Vagina (tissue), 2 donors: ENCODE measurements at regions of chr2 and their contacts with region 1.

Region 1: GRCh38 chr2:82896117-82896516 is 1563.0 kb downstream of the SUCLG1 start:
- DNase-seq: no peak
- H3K4me3 ChIP-seq: no peak overlapping the region
- H3K27ac ChIP-seq: no peak overlapping the region
- H3K4me1 ChIP-seq: no peaks in the 10 kb centered on the region
- H3K27me3 ChIP-seq: no peaks in the 10 kb centered on the region
- CTCF ChIP-seq: no peak
- POLR2A ChIP-seq: no peak

Region 2: DNA sequence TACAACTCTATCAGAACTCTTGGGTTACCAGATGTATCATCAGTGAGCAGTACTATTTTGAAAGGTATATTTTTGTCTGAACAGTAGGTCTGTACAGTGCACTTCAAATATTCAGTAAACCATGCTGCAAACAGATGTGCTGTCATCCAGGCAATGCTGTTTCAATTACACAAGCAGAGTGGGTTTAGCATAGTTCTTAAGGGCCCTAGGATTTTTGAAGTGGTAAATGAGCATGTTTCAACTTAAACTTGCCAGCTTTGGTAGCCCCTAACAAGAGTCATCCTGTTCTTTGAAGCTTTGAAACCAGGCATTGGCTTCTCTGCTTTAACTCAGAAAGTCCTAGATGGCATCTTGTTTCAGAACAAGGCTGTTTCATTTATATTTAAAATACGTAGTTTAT is 43.1 kb after region 1 on chr2:
- intact Hi-C with region 1: loop called (anchors 2 kb)
- DNase-seq: no peak
- H3K4me3 ChIP-seq: no peak overlapping the region
- H3K27ac ChIP-seq: no peak overlapping the region
- H3K4me1 ChIP-seq: no peaks in the 10 kb centered on the region
- H3K27me3 ChIP-seq: no peaks in the 10 kb centered on the region
- CTCF ChIP-seq: no peak
- POLR2A ChIP-seq: no peak